AG04450 (cell line): ENCODE measurements at regions of chr3 and their contacts with region 1.

Region 1: DNA sequence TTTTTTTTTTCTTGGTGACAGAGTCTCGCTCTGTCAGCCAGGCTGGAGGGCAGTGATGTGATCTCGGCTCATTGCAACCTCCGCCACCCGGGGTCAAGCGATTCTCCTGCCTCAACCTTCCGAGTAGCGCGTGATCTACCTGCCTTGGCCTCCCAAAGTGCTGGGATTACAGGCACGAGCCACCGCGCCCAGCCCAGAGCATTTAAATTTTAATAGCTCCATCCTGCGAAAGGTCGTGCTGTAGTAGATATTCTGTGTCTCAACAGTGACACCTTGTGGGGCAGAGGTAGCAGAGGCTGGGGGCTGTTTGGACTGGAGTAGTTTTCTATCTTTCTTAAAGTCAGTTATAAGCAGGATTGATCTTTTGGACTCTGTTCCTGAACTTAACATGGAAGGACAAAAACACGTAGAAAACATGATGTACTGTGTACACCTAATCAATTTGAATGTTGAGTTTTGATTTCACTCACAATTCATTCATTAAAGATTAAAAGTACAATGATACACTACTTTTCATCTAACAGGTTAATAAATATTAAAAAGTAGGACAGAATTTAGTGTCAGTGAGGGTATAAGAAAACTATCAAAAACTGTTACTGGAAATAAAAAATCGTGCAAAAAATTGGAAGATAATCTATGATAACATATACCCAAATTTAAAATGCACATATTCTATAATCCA is 11.0 kb upstream of the PDCD6IP start:
- DNase-seq: peak; percentile 32
- H3K4me3 ChIP-seq: peak overlapping the region; percentile 49
- H3K27ac ChIP-seq: no peak overlapping the region
- H3K27me3 ChIP-seq: no peaks in the 10 kb centered on the region
- CTCF ChIP-seq: peak; percentile 88

Region 2: DNA sequence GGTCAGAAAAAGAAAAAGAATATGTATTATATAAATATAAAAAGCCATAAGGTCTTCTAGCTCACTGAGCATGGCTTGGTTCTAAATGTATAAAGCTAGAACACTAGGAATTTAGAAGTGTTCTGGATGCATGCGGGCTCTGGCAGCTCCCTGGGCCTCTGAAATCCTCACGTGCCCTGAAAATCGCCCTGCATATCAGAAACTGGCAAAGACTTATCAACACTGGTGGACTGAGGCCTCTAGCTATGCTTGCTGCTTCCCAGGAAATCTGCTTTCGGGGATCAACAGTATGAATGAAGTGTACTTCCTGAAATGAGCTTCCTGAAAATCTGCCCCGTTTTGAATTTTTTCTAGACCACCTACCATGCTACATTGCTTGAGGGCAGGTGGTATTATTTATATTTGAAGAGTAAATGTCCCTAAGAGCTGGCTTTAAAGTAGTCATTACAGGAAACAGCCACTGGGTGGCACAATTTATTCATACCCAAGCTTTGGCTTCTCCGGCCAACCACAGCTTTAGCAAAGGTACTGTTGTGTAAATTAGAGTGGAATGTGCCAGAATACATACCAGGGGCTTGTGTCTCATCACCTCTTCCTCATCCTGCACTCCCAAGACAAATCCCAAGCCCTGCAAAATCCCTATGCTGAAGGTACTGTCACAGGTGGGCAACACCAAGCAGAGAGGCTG is 656.0 kb before region 1 on chr3:
- CTCF ChIA-PET with region 1: interaction called, 47 read pairs
- POLR2A ChIA-PET with region 1: no interaction called
- DNase-seq: peak; percentile 41
- H3K4me3 ChIP-seq: no peak overlapping the region
- H3K27ac ChIP-seq: no peak overlapping the region
- H3K27me3 ChIP-seq: no peaks in the 10 kb centered on the region
- CTCF ChIP-seq: peak; percentile 72

Region 3: GRCh38 chr3:33583103-33583502 is 204.4 kb before region 1 on chr3:
- CTCF ChIA-PET with region 1: interaction called, 12 read pairs
- POLR2A ChIA-PET with region 1: no interaction called
- DNase-seq: no peak
- H3K4me3 ChIP-seq: no peak overlapping the region
- H3K27ac ChIP-seq: no peak overlapping the region
- H3K27me3 ChIP-seq: no peaks in the 10 kb centered on the region
- CTCF ChIP-seq: no peak

Region 4: DNA sequence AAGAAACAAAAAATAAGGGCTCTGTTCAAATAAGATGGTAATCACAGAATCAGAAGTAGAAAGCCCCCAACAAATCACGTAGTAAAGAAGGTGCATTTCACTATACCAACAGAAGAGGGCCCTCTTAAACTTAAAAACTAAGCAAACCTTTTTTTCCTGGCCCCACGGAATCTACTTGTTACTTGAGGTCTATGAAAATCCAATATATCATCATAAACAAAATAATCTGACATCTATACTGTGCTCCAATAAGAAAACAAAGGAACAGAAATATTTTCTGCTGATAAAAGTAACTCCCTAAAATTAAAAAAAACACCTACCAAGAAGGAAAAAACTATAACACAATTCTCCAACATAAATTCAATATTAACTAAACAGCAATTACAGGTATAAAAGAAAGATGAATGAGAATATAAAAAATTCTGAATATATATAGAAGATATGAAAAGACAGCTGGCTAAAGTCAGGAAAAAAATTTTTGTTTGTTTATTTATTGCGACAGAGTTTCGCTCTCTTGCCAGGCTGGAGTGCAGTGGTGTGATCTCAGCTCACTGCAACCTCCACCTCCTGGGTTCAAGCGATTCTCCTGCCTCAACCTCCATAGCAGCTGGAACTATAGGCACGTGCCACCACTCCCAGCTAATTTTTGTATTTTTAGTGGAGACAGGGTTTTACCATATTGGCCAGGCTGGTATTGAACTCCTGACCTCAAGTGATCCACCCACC is 151.2 kb before region 1 on chr3:
- CTCF ChIA-PET with region 1: interaction called, 49 read pairs
- POLR2A ChIA-PET with region 1: no interaction called
- DNase-seq: peak; percentile 42
- H3K4me3 ChIP-seq: no peak overlapping the region
- H3K27ac ChIP-seq: no peak overlapping the region
- H3K27me3 ChIP-seq: no peaks in the 10 kb centered on the region
- CTCF ChIP-seq: peak; percentile 67

Region 5: DNA sequence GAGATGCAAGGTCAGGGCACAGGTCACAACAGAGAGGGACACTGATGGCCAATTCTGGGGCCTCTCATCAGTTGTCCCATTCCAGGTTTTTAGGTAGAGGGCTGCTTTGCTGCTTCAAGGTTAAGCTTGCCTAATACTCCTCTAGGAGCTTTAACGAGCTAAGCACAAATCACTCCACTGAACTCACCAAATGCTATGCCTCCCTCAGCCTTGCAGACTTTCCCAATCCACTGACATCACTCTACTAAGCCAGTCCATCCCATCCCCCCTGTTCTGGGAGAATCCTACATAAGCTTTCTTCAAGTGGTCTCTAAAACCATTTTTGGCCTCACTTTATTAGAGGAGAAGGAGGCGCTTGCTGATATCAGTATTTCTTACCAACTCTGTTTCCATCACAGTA is 13.8 kb before region 1 on chr3:
- CTCF ChIA-PET with region 1: interaction called, 83 read pairs
- POLR2A ChIA-PET with region 1: no interaction called
- DNase-seq: no peak
- H3K4me3 ChIP-seq: no peak overlapping the region
- H3K27ac ChIP-seq: no peak overlapping the region
- H3K27me3 ChIP-seq: no peaks in the 10 kb centered on the region
- CTCF ChIP-seq: no peak